ENCODE measurements at regions of chr10 and their contacts with region 1.

Region 1: DNA sequence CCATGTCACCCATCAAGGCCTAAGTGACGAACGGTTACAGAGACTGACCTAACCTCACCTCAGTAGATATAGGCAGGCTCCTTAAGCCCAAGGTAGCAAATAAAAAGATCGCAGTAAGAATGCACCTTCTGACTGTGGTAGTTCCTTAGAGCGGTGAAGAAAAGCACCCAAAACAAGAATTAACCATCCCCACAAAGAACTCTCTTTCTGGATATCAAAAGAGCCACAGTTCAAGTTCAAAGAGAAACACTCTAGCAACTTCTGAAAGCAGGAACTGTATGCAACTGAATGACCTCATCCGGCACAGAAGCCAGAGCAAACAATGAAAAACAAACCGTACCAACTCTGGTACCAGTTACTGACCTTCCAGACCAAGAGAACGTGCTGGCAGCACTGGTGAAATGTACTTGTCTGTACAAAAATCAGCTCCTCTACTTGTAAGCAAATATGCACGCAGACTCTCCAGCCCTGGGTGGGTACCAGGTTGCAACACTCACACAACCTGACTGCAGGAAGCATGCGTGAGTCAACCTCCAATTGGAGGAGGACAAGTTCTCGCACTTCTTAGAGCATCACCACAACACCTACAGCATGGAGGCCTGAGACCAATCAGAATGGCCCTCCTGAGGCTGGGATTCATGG is 202.7 kb downstream of the FAM107B start:
- DNase-seq: no peak
- H3K4me3 ChIP-seq: no peak overlapping the region
- H3K4me3 Mint-ChIP-seq: no peak overlapping the region
- H3K27ac Mint-ChIP-seq: peak overlapping the region; percentile 25
- H3K4me1 ChIP-seq: peaks cover 43% of the 10 kb centered on the region
- H3K4me1 Mint-ChIP-seq: peaks cover 33% of the 10 kb centered on the region
- H3K27me3 ChIP-seq: no peaks in the 10 kb centered on the region
- H3K27me3 Mint-ChIP-seq: no peaks in the 10 kb centered on the region
- CTCF ChIP-seq: no peak

Region 2: DNA sequence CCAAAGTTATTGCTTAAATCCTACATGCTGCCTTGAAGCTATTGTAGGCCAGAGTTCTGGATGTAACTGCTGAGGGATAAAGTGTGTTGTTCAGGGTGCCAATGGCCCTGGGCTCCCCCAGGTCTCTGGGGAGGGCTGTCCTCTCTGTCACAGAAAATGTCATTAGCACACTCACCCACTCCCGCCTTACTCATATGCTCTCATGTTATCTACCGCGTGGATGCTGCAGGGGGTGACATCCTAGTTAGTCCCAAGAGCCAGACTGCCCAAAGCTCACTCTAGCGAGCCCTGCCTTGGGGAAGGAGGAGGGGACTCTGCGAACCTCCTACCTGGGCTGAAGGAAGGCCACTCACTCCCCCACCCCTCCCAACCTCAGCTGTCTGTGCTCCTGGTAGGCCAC is 363.8 kb before region 1 on chr10:
- CTCF ChIA-PET with region 1: no interaction called
- POLR2A ChIA-PET with region 1: no interaction called
- intact Hi-C with region 1: no loop called
- DNase-seq: no peak
- H3K4me3 ChIP-seq: no peak overlapping the region
- H3K4me3 Mint-ChIP-seq: no peak overlapping the region
- H3K27ac Mint-ChIP-seq: no peak overlapping the region
- H3K4me1 ChIP-seq: peaks cover 17% of the 10 kb centered on the region
- H3K4me1 Mint-ChIP-seq: peaks cover 7% of the 10 kb centered on the region
- H3K27me3 ChIP-seq: no peaks in the 10 kb centered on the region
- H3K27me3 Mint-ChIP-seq: peaks cover 3% of the 10 kb centered on the region
- CTCF ChIP-seq: no peak

Region 3: GRCh38 chr10:14604181-14605142 is 32.5 kb after region 1 on chr10:
- CTCF ChIA-PET with region 1: no interaction called
- POLR2A ChIA-PET with region 1: no interaction called
- intact Hi-C with region 1: no loop called
- DNase-seq: peak; percentile 79 to 89
- H3K4me3 ChIP-seq: peak overlapping the region; percentile 49
- H3K4me3 Mint-ChIP-seq: peak overlapping the region; percentile 80
- H3K27ac Mint-ChIP-seq: peak overlapping the region; percentile 43
- H3K4me1 ChIP-seq: peaks cover 51% of the 10 kb centered on the region
- H3K4me1 Mint-ChIP-seq: peaks cover 40% of the 10 kb centered on the region
- H3K27me3 ChIP-seq: no peaks in the 10 kb centered on the region
- H3K27me3 Mint-ChIP-seq: no peaks in the 10 kb centered on the region
- CTCF ChIP-seq: no peak

Region 4: DNA sequence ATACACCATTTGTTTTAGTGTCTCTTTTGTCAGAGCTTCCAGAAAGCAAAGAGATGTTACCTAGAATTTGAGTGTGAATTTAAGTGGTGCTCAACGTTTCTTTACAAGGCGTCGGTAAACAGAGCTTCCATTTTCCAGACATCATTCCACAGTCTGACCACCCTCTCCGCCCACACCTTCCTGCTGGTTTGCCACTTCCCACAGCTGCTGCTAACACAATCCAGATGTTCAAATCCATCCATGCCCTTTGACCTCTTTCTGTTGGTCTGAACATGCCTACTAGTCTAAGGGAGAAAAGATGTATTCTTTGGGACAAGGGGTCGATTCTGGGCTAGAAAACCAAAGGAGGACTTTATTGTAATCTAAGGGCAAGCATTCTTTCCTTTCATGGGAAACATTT is 116.6 kb after region 1 on chr10:
- CTCF ChIA-PET with region 1: no interaction called
- POLR2A ChIA-PET with region 1: interaction called, 10 read pairs
- intact Hi-C with region 1: no loop called
- DNase-seq: no peak
- H3K4me3 ChIP-seq: no peak overlapping the region
- H3K4me3 Mint-ChIP-seq: no peak overlapping the region
- H3K27ac Mint-ChIP-seq: peak overlapping the region; percentile 17
- H3K4me1 ChIP-seq: peaks cover 33% of the 10 kb centered on the region
- H3K4me1 Mint-ChIP-seq: peaks cover 33% of the 10 kb centered on the region
- H3K27me3 ChIP-seq: no peaks in the 10 kb centered on the region
- H3K27me3 Mint-ChIP-seq: no peaks in the 10 kb centered on the region
- CTCF ChIP-seq: no peak

Region 5: GRCh38 chr10:14723052-14723689 is 151.2 kb after region 1 on chr10:
- CTCF ChIA-PET with region 1: no interaction called
- POLR2A ChIA-PET with region 1: no interaction called
- intact Hi-C with region 1: no loop called
- DNase-seq: no peak
- H3K4me3 ChIP-seq: no peak overlapping the region
- H3K4me3 Mint-ChIP-seq: no peak overlapping the region
- H3K27ac Mint-ChIP-seq: no peak overlapping the region
- H3K4me1 ChIP-seq: no peaks in the 10 kb centered on the region
- H3K4me1 Mint-ChIP-seq: no peaks in the 10 kb centered on the region
- H3K27me3 ChIP-seq: no peaks in the 10 kb centered on the region
- H3K27me3 Mint-ChIP-seq: no peaks in the 10 kb centered on the region
- CTCF ChIP-seq: no peak

Region 6: GRCh38 chr10:14959276-14960057 is 387.5 kb after region 1 on chr10 and contains the start of gene MEIG1:
- CTCF ChIA-PET with region 1: no interaction called
- POLR2A ChIA-PET with region 1: no interaction called
- intact Hi-C with region 1: loop called (anchors 10 kb)
- DNase-seq: peak; percentile 98 to 99
- H3K4me3 ChIP-seq: peak within 1 kb of the TSS; percentile 62
- H3K4me3 Mint-ChIP-seq: peak within 1 kb of the TSS; percentile 99
- H3K27ac Mint-ChIP-seq: peak within 1 kb of the TSS; percentile 100
- H3K4me1 ChIP-seq: peaks cover 9% of the 10 kb centered on the region
- H3K4me1 Mint-ChIP-seq: peaks cover 6% of the 10 kb centered on the region
- H3K27me3 ChIP-seq: no peaks in the 10 kb centered on the region
- H3K27me3 Mint-ChIP-seq: no peaks in the 10 kb centered on the region
- CTCF ChIP-seq: no peak
- total RNA-seq, gene MEIG1: not detected in 2 replicates

Region 7: GRCh38 chr10:15763006-15763405 is 1191.0 kb after region 1 on chr10:
- CTCF ChIA-PET with region 1: no interaction called
- POLR2A ChIA-PET with region 1: no interaction called
- intact Hi-C with region 1: no loop called
- DNase-seq: no peak
- H3K4me3 ChIP-seq: no peak overlapping the region
- H3K4me3 Mint-ChIP-seq: no peak overlapping the region
- H3K27ac Mint-ChIP-seq: no peak overlapping the region
- H3K4me1 ChIP-seq: no peaks in the 10 kb centered on the region
- H3K4me1 Mint-ChIP-seq: no peaks in the 10 kb centered on the region
- H3K27me3 ChIP-seq: no peaks in the 10 kb centered on the region
- H3K27me3 Mint-ChIP-seq: peaks cover 11% of the 10 kb centered on the region
- CTCF ChIP-seq: no peak